IMR-90 (cell line): ENCODE measurements at regions of chr11 and their contacts with region 1.

Region 1: GRCh38 chr11:78000193-78000592 is 5.7 kb upstream of the INTS4 start:
- DNase-seq: peak; percentile 77
- ATAC-seq: peak; percentile 94
- H3K4me3 ChIP-seq: no peak overlapping the region
- H3K27ac ChIP-seq: no peak overlapping the region
- H3K4me1 ChIP-seq: peaks cover 2% of the 10 kb centered on the region; the same call in 1 of the 2 replicates
- H3K27me3 ChIP-seq: peaks cover 5% of the 10 kb centered on the region
- CTCF ChIP-seq: peak; percentile 74
- POLR2A ChIP-seq: no peak
- RAD21 ChIP-seq: peak; percentile 71

Region 2: GRCh38 chr11:78045851-78046485 is 45.8 kb after region 1 on chr11:
- CTCF ChIA-PET with region 1: interaction called, 6 read pairs
- POLR2A ChIA-PET with region 1: no interaction called
- dilution Hi-C with region 1: no loop called
- in situ Hi-C with region 1: no loop called
- intact Hi-C with region 1: loop called (anchors 1 kb)
- DNase-seq: peak; percentile 59
- ATAC-seq: peak; percentile 93
- H3K4me3 ChIP-seq: peak overlapping the region; percentile 41
- H3K27ac ChIP-seq: peak overlapping the region; percentile 29
- H3K4me1 ChIP-seq: peaks cover 23% of the 10 kb centered on the region
- H3K27me3 ChIP-seq: no peaks in the 10 kb centered on the region
- CTCF ChIP-seq: peak; percentile 95
- POLR2A ChIP-seq: no peak
- RAD21 ChIP-seq: peak; percentile 92

Region 3: DNA sequence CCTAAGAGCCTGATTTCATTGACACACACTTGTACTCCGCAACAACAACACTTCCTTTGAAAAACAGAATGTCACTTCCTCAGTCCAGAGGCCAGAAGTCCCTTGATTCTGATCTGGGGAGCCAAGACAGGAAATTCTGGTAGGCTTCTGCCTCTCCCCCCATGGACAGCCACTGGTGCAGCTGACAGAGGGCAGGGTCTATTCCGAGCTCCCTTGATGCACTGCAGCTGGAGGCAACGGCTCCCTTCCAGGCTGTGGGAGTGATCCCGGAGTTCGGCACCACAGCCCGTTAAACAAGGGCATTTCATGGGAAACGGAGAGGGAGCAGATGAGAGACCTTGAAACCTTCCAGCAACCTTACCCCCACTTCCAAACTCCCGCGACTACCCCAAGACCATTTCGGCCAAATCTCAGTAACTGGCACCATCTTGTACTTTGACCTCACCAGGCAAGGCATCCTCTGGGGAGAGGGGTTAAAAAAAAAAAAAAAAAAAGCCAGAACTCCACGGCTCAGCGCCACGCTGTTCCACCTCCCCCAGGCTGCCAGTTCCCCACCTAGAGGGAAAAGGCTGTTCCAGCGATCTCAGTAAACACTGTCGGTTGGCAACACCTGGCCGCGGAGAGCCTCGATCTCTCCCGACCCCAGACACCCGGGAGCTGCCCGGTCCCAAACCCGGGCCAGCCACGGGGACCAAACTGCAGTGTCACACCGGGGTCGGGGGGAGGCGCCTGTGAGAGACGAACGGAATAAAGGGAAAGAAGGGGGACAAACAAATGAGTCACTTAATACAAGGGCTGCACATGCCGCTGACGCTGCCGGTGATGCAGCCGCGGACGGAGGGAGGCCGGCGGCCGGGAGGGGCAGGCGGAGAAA is 416.3 kb after region 1 on chr11:
- CTCF ChIA-PET with region 1: no interaction called
- POLR2A ChIA-PET with region 1: no interaction called
- dilution Hi-C with region 1: no loop called
- in situ Hi-C with region 1: no loop called
- intact Hi-C with region 1: no loop called
- DNase-seq: peak; percentile 87
- ATAC-seq: peak; percentile 64
- H3K4me3 ChIP-seq: peak overlapping the region; percentile 86
- H3K27ac ChIP-seq: peak overlapping the region; percentile 84
- H3K4me1 ChIP-seq: peaks cover 19% of the 10 kb centered on the region
- H3K27me3 ChIP-seq: no peaks in the 10 kb centered on the region
- CTCF ChIP-seq: peak; percentile 64
- POLR2A ChIP-seq: peak; percentile 65; the same call in 1 of the 2 replicates
- RAD21 ChIP-seq: peak; percentile 57